GM12878 (cell line): ENCODE measurements at regions of chr3 and their contacts with region 1.

Region 1: GRCh38 chr3:45958321-45958791 is 15.1 kb downstream of the CXCR6 start:
- DNase-seq: no peak
- ATAC-seq: no peak
- H3K4me3 ChIP-seq: no peak overlapping the region
- H3K27ac ChIP-seq: no peak overlapping the region
- H3K4me1 ChIP-seq: peaks cover 19% of the 10 kb centered on the region
- H3K27me3 ChIP-seq: no peaks in the 10 kb centered on the region
- CTCF ChIP-seq: no peak
- EP300 ChIP-seq: no peak
- POLR2A ChIP-seq: no peak
- RAD21 ChIP-seq: no peak

Region 2: GRCh38 chr3:45972534-45973402 is 14.4 kb after region 1 on chr3:
- CTCF ChIA-PET with region 1: interaction called, 4 read pairs
- POLR2A ChIA-PET with region 1: interaction called, 6 read pairs
- RAD21 ChIA-PET with region 1: interaction called, 13 read pairs
- SMC1A ChIA-PET with region 1: interaction called, 17 read pairs
- in situ Hi-C with region 1: no loop called
- intact Hi-C with region 1: no loop called
- DNase-seq: no peak
- ATAC-seq: peak; percentile 85
- H3K4me3 ChIP-seq: peak overlapping the region; percentile 3; the same call in 1 of the 2 replicates
- H3K27ac ChIP-seq: 0 out of 2 replicates have a peak overlapping the region, but pooled peaks have one; percentile 27
- H3K4me1 ChIP-seq: peaks cover 20% of the 10 kb centered on the region
- H3K27me3 ChIP-seq: no peaks in the 10 kb centered on the region
- CTCF ChIP-seq: no peak
- EP300 ChIP-seq: 0 out of 4 replicates have a peak, but pooled peaks of 1 of the 2 experiments have one; percentile 50
- POLR2A ChIP-seq: no peak
- RAD21 ChIP-seq: no peak

Region 3: DNA sequence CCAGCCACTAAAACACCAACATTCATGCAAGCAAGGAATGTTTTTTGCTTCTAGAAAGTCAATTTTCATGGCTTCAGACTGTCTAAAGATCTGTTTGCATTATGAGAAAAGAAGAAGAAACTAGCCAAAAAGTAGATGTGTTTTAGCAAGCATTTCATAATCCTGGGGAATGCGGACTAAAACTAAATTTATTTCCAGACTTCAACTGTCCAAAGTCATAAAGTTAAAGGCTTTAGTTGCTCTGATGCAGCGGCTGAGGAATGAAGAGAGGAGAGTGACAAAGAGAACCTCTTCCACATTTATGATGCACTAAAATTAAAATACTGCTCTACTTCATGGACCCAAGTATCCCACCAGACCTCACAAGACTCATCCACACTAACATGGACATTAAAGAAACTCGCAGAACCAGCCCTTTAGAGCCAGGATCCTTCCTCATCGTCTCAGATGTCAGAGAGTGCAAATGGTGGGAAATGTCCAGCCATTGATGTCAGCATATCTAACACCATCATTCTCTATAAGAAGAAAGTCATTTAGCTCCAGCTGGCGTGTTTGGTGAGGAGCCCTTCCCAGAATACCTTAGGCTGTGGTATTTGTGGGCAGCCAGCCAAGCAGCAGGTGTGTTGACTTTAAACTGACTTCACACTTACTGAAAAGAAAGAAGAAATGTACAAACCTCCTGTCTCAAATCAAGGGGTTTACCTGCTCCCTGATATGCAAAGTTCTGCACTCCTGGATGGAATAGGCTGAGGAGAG is 19.8 kb after region 1 on chr3:
- CTCF ChIA-PET with region 1: interaction called, 9 read pairs
- POLR2A ChIA-PET with region 1: interaction called, 6 read pairs
- RAD21 ChIA-PET with region 1: interaction called, 13 read pairs
- SMC1A ChIA-PET with region 1: interaction called, 17 read pairs
- in situ Hi-C with region 1: no loop called
- intact Hi-C with region 1: no loop called
- DNase-seq: no peak
- ATAC-seq: no peak
- H3K4me3 ChIP-seq: no peak overlapping the region
- H3K27ac ChIP-seq: no peak overlapping the region
- H3K4me1 ChIP-seq: peaks cover 11% of the 10 kb centered on the region
- H3K27me3 ChIP-seq: no peaks in the 10 kb centered on the region
- CTCF ChIP-seq: no peak
- EP300 ChIP-seq: no peak
- POLR2A ChIP-seq: no peak
- RAD21 ChIP-seq: no peak

Region 4: DNA sequence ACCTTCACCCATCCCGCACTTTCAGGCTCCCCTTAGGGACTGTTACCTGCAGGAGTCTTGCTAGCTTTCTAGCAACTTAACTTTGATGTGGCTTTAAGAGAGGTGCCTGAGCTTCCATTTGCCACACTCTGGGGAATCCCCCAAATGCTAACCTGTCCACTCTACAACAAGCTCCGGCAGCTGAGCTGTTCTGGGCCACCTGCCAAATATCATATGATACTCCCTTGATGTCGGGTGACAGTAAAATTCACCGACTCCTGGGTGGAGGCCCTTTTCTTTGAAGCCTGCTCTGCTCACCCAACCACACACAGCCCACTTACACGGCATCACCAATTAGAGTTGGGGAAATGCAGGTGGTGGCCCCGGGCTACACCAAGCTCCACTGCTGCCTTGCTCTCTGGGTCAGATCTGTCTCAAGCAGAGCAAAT is 107.0 kb after region 1 on chr3:
- CTCF ChIA-PET with region 1: interaction called, 3 read pairs
- POLR2A ChIA-PET with region 1: interaction called, 6 read pairs
- RAD21 ChIA-PET with region 1: interaction called, 12 read pairs
- SMC1A ChIA-PET with region 1: interaction called, 6 read pairs
- in situ Hi-C with region 1: no loop called
- intact Hi-C with region 1: no loop called
- DNase-seq: peak; percentile 56
- ATAC-seq: peak; percentile 96
- H3K4me3 ChIP-seq: no peak overlapping the region
- H3K27ac ChIP-seq: no peak overlapping the region
- H3K4me1 ChIP-seq: peaks cover 19% of the 10 kb centered on the region
- H3K27me3 ChIP-seq: no peaks in the 10 kb centered on the region
- CTCF ChIP-seq: no peak
- EP300 ChIP-seq: peak in 1 of 2 experiments; percentile 59; a peak in 2 of 4 replicates
- POLR2A ChIP-seq: no peak
- RAD21 ChIP-seq: peak; percentile 0; the same call in 1 of the 2 replicates